Aorta (tissue), 5 donors: ENCODE measurements at regions of chr14 and their contacts with region 1.

Region 1: GRCh38 chr14:35341446-35342159 is 49.4 kb downstream of the PSMA6 start:
- DNase-seq: peak; percentile 98
- ATAC-seq: peak; percentile 94
- H3K4me3 ChIP-seq: no peak overlapping the region
- H3K27ac ChIP-seq: peak overlapping the region; percentile 34 to 59
- H3K4me1 ChIP-seq: no peaks in the 10 kb centered on the region
- H3K27me3 ChIP-seq: no peaks in the 10 kb centered on the region

Region 2: DNA sequence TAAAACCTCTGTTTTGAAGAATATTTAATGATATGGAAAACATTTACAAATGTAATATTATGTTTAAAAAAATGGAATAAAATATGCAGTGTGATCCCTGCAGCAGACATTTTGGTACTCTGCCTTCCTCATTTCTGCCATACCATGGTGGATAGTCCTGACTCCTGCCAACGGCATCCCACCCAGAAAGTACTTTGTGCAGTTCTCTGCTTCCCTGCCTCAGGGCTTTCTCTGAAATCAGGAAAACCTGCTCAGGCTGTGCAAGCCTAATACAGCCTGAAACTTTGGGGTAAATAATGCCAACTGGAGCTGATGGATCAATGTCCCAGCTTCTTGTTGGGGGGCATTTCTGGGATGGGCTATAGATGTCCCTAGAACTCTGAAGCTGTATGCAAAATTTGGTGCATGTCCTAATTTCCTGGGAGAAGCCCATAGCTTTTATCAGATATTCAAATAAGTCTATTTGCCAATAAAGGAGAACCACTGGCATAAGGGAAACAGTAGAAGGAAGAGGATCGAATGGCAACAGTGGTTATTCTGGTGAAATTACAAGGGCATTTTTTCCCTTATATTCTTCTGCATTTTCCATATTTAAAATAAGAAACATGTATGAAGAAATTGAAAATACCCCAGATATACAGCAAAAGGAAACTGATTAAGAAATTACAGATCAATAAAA is 15.4 kb before region 1 on chr14:
- intact Hi-C with region 1: no loop called
- DNase-seq: no peak
- ATAC-seq: no peak
- H3K4me3 ChIP-seq: no peak overlapping the region
- H3K27ac ChIP-seq: no peak overlapping the region
- H3K4me1 ChIP-seq: no peaks in the 10 kb centered on the region
- H3K27me3 ChIP-seq: no peaks in the 10 kb centered on the region

Region 3: GRCh38 chr14:35385042-35385839 is 43.6 kb after region 1 on chr14:
- intact Hi-C with region 1: loop called in 1 of 2 experiments (anchors 5 kb)
- DNase-seq: peak; percentile 87 to 93
- ATAC-seq: peak; percentile 93
- H3K4me3 ChIP-seq: no peak overlapping the region
- H3K27ac ChIP-seq: peak overlapping the region in 1 of 2 donors; percentile 66
- H3K4me1 ChIP-seq: peaks cover 0 to 4% of the 10 kb centered on the region in 2 donors
- H3K27me3 ChIP-seq: no peaks in the 10 kb centered on the region

Region 4: DNA sequence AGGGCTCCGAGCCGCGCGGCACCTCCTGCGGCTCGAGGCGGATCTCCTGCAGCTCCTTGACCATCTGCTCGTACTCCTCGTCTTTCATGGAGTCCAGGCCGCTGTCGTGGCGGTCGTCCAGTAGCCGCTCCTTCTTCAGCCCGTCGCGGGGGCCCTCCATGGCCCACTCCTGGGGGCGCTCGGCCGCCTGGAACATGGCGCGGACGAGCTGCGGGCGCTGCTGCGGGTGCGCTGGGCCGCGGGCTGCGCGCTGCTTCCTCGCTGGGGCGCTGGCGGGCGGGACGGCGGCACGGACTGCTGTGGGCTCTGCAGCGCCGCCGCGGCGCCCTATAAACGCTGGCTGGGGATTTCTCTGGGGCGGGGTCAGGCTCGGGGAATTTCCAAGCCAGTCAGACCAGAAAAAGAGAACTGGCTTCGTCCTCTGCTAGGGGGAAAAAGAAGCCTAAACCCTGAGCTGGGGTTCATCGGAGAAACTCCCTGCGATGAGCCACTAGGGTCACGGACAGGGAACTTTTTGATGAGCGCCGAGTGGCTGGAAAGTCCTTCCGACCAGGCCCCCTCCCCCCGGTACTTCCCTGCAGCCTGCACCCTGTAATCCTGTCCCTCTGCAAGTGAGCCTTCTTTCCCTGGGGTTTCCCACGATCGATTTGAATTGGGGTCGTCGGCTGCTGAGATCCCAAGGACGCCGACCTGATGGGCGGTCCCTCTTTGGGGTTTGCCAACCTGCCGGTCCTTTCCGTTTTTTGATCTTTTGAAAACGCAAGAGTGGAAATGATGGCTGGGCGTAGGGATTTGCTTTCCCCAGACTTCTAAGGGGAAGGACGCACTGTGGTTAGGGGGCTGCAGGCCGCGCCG is 63.1 kb after region 1 on chr14 and contains the start of gene NFKBIA:
- intact Hi-C with region 1: loop called (anchors 2 to 5 kb)
- DNase-seq: peak; percentile 95 to 97
- ATAC-seq: peak; percentile 89
- H3K4me3 ChIP-seq: peak within 1 kb of the TSS; percentile 94 to 97
- H3K27ac ChIP-seq: peak within 1 kb of the TSS; percentile 95 to 99
- H3K4me1 ChIP-seq: peaks cover 0 to 4% of the 10 kb centered on the region in 2 donors
- H3K27me3 ChIP-seq: no peaks in the 10 kb centered on the region
- total RNA-seq, gene NFKBIA: 126 to 186 TPM